ENCODE measurements at regions of chr5 and their contacts with region 1.

Region 1: GRCh38 chr5:78467752-78468357 is 107.4 kb downstream of the SCAMP1 start:
- DNase-seq: no peak
- ATAC-seq: peak; percentile 57 to 74

Region 2: GRCh38 chr5:78627175-78627574 is 159.3 kb after region 1 on chr5:
- intact Hi-C with region 1: loop called in 1 of 2 experiments (anchors 10 kb)
- DNase-seq: no peak
- ATAC-seq: peak in 1 of 2 donors; percentile 18

Region 3: GRCh38 chr5:78747705-78748359 is 280.0 kb after region 1 on chr5:
- intact Hi-C with region 1: no loop called
- DNase-seq: no peak
- ATAC-seq: peak in 1 of 2 donors; percentile 89